Activated B cell treated with CpG ODN at 0.5 μM for 24 hours (primary cell): ENCODE measurements at regions of chr3 and their contacts with region 1.

Region 1: GRCh38 chr3:160343132-160343531 is 55.9 kb downstream of the IFT80 start:
- DNase-seq: no peak
- ATAC-seq: no peak
- H3K4me3 Mint-ChIP-seq: no peak overlapping the region
- H3K27ac Mint-ChIP-seq: no peak overlapping the region
- H3K4me1 Mint-ChIP-seq: no peaks in the 10 kb centered on the region
- H3K27me3 Mint-ChIP-seq: no peaks in the 10 kb centered on the region
- CTCF ChIP-seq: no peak

Region 2: DNA sequence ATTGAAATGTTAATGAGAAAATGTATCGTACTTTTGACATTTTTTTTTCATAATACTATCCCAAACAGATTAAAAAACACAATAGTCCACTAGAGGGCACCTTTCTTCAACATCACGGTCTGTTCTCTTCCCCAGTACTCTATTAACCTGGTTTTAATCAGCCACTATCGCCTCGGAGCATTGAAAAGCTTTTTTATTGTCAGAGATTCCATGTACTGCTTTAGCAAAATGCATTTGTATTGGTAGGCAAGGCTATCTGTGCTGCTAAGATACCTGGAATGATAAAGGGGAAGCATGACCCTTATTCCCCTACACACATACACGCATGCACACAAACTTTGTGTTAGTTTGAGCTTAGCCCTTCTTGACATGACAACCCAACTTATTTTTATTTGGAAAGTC is 514.6 kb before region 1 on chr3:
- CTCF ChIA-PET with region 1: no interaction called
- POLR2A ChIA-PET with region 1: no interaction called
- intact Hi-C with region 1: loop called (anchors 5 kb)
- DNase-seq: no peak
- ATAC-seq: peak; percentile 31
- H3K4me3 Mint-ChIP-seq: no peak overlapping the region
- H3K27ac Mint-ChIP-seq: no peak overlapping the region
- H3K4me1 Mint-ChIP-seq: peaks cover 4% of the 10 kb centered on the region
- H3K27me3 Mint-ChIP-seq: no peaks in the 10 kb centered on the region
- CTCF ChIP-seq: no peak

Region 3: GRCh38 chr3:160027541-160028195 is 315.5 kb before region 1 on chr3:
- CTCF ChIA-PET with region 1: interaction called, 3 read pairs
- POLR2A ChIA-PET with region 1: no interaction called
- intact Hi-C with region 1: loop called (anchors 1 kb)
- DNase-seq: no peak
- ATAC-seq: no peak
- H3K4me3 Mint-ChIP-seq: no peak overlapping the region
- H3K27ac Mint-ChIP-seq: peak overlapping the region; percentile 36
- H3K4me1 Mint-ChIP-seq: no peaks in the 10 kb centered on the region
- H3K27me3 Mint-ChIP-seq: no peaks in the 10 kb centered on the region
- CTCF ChIP-seq: no peak

Region 4: GRCh38 chr3:160150525-160150924 is 192.6 kb before region 1 on chr3:
- CTCF ChIA-PET with region 1: no interaction called
- POLR2A ChIA-PET with region 1: no interaction called
- intact Hi-C with region 1: loop called (anchors 10 kb)
- DNase-seq: no peak
- ATAC-seq: no peak
- H3K4me3 Mint-ChIP-seq: no peak overlapping the region
- H3K27ac Mint-ChIP-seq: no peak overlapping the region
- H3K4me1 Mint-ChIP-seq: no peaks in the 10 kb centered on the region
- H3K27me3 Mint-ChIP-seq: peaks cover 1% of the 10 kb centered on the region
- CTCF ChIP-seq: no peak

Region 5: GRCh38 chr3:160565442-160566403 is 222.6 kb after region 1 on chr3 and contains the start of gene KPNA4:
- CTCF ChIA-PET with region 1: no interaction called
- POLR2A ChIA-PET with region 1: no interaction called
- intact Hi-C with region 1: no loop called
- DNase-seq: peak; percentile 95
- ATAC-seq: peak; percentile 88
- H3K4me3 Mint-ChIP-seq: peak within 1 kb of the TSS; percentile 95
- H3K27ac Mint-ChIP-seq: peak within 1 kb of the TSS; percentile 94
- H3K4me1 Mint-ChIP-seq: peaks cover 53% of the 10 kb centered on the region
- H3K27me3 Mint-ChIP-seq: no peaks in the 10 kb centered on the region
- CTCF ChIP-seq: no peak
- total RNA-seq, gene KPNA4: 43.4 and 46.7 TPM in 2 replicates